WTC11 (cell line): ENCODE measurements at regions of chr7 and their contacts with region 1.

Region 1: GRCh38 chr7:131859147-131859821 is 302.9 kb upstream of the PODXL start:
- DNase-seq: peak; percentile 83
- ATAC-seq: peak; percentile 98
- H3K4me3 Mint-ChIP-seq: no peak overlapping the region
- H3K27ac Mint-ChIP-seq: no peak overlapping the region
- H3K4me1 Mint-ChIP-seq: peaks cover 6% of the 10 kb centered on the region; the same call in 1 of the 2 replicates
- H3K27me3 Mint-ChIP-seq: peaks cover 6% of the 10 kb centered on the region
- CTCF ChIP-seq: peak; percentile 79

Region 2: GRCh38 chr7:131688738-131689661 is 170.3 kb before region 1 on chr7:
- CTCF ChIA-PET with region 1: interaction called, 124 read pairs
- POLR2A ChIA-PET with region 1: no interaction called
- DNase-seq: peak; percentile 91
- ATAC-seq: peak; percentile 80
- H3K4me3 Mint-ChIP-seq: no peak overlapping the region
- H3K27ac Mint-ChIP-seq: no peak overlapping the region
- H3K4me1 Mint-ChIP-seq: peaks cover 13% of the 10 kb centered on the region
- H3K27me3 Mint-ChIP-seq: peaks cover 6% of the 10 kb centered on the region
- CTCF ChIP-seq: peak; percentile 98

Region 3: DNA sequence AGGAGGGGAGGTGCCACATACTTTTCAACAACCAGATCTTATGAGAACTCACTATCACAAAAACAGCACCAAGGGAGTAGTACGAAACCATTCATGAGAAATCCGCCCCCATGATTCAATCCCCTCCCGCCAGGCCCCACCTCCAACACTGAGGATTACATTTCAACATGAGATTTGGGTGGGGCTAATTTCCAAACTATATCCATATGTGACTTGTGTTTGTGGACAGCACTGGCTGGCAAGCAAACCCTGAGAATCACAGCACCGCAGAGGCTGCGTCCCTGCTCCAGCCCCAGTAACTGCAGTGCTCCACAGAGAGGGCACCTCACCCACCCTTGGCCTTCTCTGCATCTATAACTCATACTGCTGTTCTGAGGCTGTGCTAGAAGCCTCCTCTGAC is 91.7 kb before region 1 on chr7:
- CTCF ChIA-PET with region 1: no interaction called
- POLR2A ChIA-PET with region 1: no interaction called
- DNase-seq: no peak
- ATAC-seq: no peak
- H3K4me3 Mint-ChIP-seq: no peak overlapping the region
- H3K27ac Mint-ChIP-seq: no peak overlapping the region
- H3K4me1 Mint-ChIP-seq: peaks cover 9% of the 10 kb centered on the region
- H3K27me3 Mint-ChIP-seq: no peaks in the 10 kb centered on the region; the same call in 1 of the 2 replicates
- CTCF ChIP-seq: no peak

Region 4: DNA sequence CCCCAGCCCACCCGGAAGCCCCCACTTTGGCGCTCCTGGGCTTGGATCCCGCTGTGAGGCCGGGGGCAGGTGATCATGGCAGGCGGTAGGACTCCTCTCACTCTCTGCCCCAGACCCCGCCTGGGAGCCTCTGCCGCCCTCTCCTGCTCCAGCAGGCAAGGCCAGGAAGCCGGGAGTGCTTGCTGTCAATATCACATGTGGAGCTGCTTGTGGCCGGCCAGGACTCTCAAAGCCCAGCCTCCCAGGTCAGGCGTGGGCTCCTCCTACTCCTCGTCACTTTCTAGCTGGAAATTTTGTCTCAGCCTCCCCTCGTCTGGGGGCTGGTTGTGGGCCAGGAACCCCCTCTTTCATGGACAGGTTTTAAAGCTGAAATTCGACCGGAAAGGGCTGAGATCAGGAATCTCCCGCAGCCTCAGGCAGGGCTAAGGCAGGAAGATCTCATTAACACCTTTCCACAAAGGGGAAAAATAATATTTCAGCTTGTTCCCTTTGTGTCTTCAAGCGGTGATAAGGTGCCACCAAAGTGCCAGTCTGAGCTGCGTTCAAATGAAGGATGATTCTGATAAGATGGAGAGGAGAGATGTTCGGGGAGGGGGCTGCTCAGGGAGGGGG is 29.2 kb before region 1 on chr7:
- CTCF ChIA-PET with region 1: interaction called, 14 read pairs
- POLR2A ChIA-PET with region 1: no interaction called
- DNase-seq: peak; percentile 76
- ATAC-seq: peak; percentile 98
- H3K4me3 Mint-ChIP-seq: peak overlapping the region; percentile 33
- H3K27ac Mint-ChIP-seq: no peak overlapping the region
- H3K4me1 Mint-ChIP-seq: peaks cover 21% of the 10 kb centered on the region
- H3K27me3 Mint-ChIP-seq: peaks cover 19% of the 10 kb centered on the region
- CTCF ChIP-seq: no peak

Region 5: GRCh38 chr7:131869169-131869844 is 10.0 kb after region 1 on chr7:
- CTCF ChIA-PET with region 1: interaction called, 24 read pairs
- POLR2A ChIA-PET with region 1: no interaction called
- DNase-seq: no peak
- ATAC-seq: no peak
- H3K4me3 Mint-ChIP-seq: no peak overlapping the region
- H3K27ac Mint-ChIP-seq: no peak overlapping the region
- H3K4me1 Mint-ChIP-seq: no peaks in the 10 kb centered on the region
- H3K27me3 Mint-ChIP-seq: peaks cover 17% of the 10 kb centered on the region
- CTCF ChIP-seq: no peak

Region 6: DNA sequence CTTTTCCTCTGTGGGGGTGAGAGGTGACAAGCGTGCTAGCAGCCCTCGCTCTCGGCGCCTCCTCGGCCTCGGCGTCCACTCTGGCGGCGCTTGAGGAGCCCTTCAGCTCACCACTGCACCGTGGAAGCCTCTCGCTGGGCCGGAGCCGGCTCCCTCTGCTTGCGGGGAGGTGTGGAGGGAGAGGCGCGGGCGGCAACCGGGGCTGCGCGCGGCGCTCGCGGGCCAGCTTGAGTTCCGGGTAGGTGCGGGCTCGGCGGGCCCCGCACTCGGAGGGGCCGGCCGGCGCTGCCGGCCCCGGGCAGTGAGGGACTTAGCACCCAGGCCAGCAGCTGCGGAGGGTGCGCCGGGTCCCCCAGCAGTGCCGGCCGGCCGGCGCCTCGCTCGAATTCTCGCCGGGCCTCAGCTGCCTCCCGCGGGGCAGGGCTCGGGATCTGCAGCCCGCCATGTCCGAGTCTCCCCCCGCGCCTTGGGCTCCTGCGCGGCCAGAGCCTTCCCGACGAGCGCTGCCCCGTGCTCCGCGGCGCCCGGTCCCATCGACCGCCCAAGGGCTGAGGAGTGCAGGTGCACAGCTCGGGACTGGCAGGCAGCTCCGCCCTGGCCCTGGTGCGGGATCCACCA is 50.0 kb after region 1 on chr7:
- CTCF ChIA-PET with region 1: interaction called, 41 read pairs
- POLR2A ChIA-PET with region 1: no interaction called
- DNase-seq: peak; percentile 59
- ATAC-seq: peak; percentile 72
- H3K4me3 Mint-ChIP-seq: peak overlapping the region; percentile 65
- H3K27ac Mint-ChIP-seq: no peak overlapping the region
- H3K4me1 Mint-ChIP-seq: peaks cover 3% of the 10 kb centered on the region; the same call in 1 of the 2 replicates
- H3K27me3 Mint-ChIP-seq: peaks cover 86% of the 10 kb centered on the region
- CTCF ChIP-seq: no peak

Region 7: GRCh38 chr7:131995328-131995727 is 136.0 kb after region 1 on chr7:
- CTCF ChIA-PET with region 1: interaction called, 10 read pairs
- POLR2A ChIA-PET with region 1: no interaction called
- DNase-seq: no peak
- ATAC-seq: peak; percentile 47; the same call in 1 of the 2 replicates
- H3K4me3 Mint-ChIP-seq: no peak overlapping the region
- H3K27ac Mint-ChIP-seq: no peak overlapping the region
- H3K4me1 Mint-ChIP-seq: 0 out of 2 replicates have a peak, but pooled peaks cover 3% of the 10 kb centered on the region
- H3K27me3 Mint-ChIP-seq: no peaks in the 10 kb centered on the region; the same call in 1 of the 2 replicates
- CTCF ChIP-seq: no peak